Sciatic nerve (tissue), 2 donors: ENCODE measurements at regions of chr16 and their contacts with region 1.

Region 1: GRCh38 chr16:84726079-84726668 is 26.4 kb downstream of the USP10 start:
- DNase-seq: peak; percentile 97
- ATAC-seq: peak; percentile 91

Region 2: GRCh38 chr16:84116720-84117493 is 609.3 kb before region 1 on chr16 and contains the start of gene MBTPS1:
- intact Hi-C with region 1: loop called (anchors 5 kb)
- DNase-seq: peak; percentile 99
- ATAC-seq: peak; percentile 99
- total RNA-seq, gene MBTPS1: 91.1 TPM

Region 3: GRCh38 chr16:84633622-84634021 is 92.6 kb before region 1 on chr16:
- intact Hi-C with region 1: loop called (anchors 5 kb)
- DNase-seq: peak; percentile 87
- ATAC-seq: peak; percentile 94

Region 4: DNA sequence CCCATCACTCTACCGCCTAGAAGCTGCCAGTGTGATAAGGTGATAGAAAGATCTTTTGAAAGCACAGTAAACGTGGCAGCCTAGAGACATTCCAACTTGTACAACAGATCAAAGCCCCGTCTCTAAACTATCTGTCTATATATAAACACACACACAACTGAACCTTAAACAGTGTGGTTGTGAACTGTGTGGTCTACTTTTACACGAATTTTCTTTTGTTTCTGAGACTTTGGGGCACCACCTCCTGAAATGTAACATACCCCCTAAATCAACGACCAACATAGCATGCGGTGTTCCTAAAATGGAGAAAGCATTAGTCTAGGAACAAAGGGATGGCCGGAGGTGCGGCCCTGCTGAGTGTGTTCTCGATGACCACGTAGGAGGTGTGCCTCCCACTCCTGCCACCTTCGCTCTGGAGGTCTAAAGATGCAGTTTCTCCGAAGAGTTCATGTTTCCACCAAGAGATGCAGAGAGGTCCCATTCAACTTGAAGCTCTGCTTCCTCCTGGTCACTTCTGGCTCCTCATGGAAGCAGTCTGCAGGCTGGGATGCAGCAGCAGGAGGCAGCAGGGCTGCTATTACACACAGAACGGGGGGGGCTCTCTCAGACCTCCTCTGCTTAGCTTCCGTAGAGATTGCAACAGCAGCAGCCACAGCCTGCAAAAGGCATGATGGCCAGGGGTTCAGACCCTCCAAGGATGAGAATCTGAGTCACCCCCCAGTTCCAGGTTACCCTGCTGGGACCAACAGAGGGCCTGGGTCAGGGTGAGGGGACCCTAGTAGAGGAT is 49.0 kb before region 1 on chr16:
- intact Hi-C with region 1: loop called (anchors 5 kb)
- DNase-seq: no peak
- ATAC-seq: no peak

Region 5: DNA sequence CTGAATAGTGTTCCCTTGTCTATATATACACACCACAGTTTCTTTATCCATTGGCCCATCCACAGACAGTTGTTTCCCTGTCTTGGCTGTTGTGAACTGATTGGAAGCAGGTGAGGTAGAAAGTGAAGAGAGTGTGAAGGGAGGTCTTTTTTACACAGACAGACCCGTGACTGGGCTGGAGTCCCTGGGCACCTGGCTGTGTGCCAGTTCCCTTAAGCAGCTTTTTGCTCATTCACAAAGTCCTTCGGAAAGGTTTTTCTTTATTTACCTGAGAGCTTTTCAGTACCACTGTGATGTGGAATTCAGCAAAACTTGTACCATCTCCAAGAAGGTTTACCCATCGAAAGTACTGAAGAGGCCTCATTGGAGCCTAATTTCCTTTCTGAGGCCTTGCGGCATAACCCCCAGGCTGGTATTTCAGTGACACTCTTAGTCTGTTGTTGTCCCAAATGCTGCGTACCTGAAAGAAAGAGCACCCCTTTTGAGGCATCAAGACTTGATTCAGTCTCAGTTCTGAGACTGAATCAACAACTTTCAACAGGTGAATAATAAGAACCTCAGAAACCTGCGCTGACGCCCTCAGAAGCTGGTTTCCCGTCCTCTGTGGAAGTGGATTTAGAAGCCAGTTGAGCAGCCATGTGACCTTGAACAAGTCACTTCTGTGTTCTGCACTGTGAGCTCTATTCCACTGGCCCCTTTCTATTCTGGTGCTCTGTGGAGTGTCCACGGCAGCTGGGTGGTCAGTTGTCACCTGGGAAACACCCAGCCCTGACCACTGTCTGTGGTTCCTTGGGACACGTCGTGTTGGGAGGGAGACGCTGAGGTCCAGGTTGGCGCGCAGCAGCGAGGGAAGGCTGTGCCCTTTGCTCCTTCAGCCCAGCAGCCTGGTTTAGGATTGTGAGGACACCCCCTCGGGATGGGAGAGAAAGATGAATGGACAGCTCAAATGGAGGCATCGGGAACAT is 39.7 kb after region 1 on chr16:
- intact Hi-C with region 1: no loop called
- DNase-seq: no peak
- ATAC-seq: peak; percentile 7